ENCODE measurements at regions of chr5 and their contacts with region 1.

Region 1: GRCh38 chr5:172932313-172933017 is 26.8 kb upstream of the RPL26L1 start:
- DNase-seq: peak; percentile 31 to 85 (median 71)
- ATAC-seq: peak; percentile 92 to 97 (median 94)
- H3K4me3 ChIP-seq: no peak overlapping the region
- H3K4me3 Mint-ChIP-seq: no peak overlapping the region
- H3K27ac ChIP-seq: no peak overlapping the region
- H3K27ac Mint-ChIP-seq: no peak overlapping the region
- H3K4me1 ChIP-seq: peaks cover 0 to 6% of the 10 kb centered on the region in 2 experiments
- H3K4me1 Mint-ChIP-seq: peaks cover 0 to 6% (median 6%) of the 10 kb centered on the region in 3 donors
- H3K27me3 ChIP-seq: no peaks in the 10 kb centered on the region
- H3K27me3 Mint-ChIP-seq: no peaks in the 10 kb centered on the region

Region 2: GRCh38 chr5:172707285-172708182 is 224.9 kb before region 1 on chr5:
- CTCF ChIA-PET with region 1: interaction called, 59 to 111 read pairs
- POLR2A ChIA-PET with region 1: interaction called in 1 of 2 experiments, 11 read pairs
- DNase-seq: no peak
- ATAC-seq: no peak
- H3K4me3 ChIP-seq: no peak overlapping the region
- H3K4me3 Mint-ChIP-seq: no peak overlapping the region
- H3K27ac ChIP-seq: no peak overlapping the region
- H3K27ac Mint-ChIP-seq: no peak overlapping the region
- H3K4me1 ChIP-seq: peaks cover 0 to 2% of the 10 kb centered on the region in 2 experiments
- H3K4me1 Mint-ChIP-seq: peaks cover 0 to 4% (median 0%) of the 10 kb centered on the region in 3 donors
- H3K27me3 ChIP-seq: peaks cover 0 to 43% of the 10 kb centered on the region in 2 experiments
- H3K27me3 Mint-ChIP-seq: peaks cover 38 to 46% of the 10 kb centered on the region in 2 donors

Region 3: GRCh38 chr5:172714491-172715421 is 217.7 kb before region 1 on chr5:
- CTCF ChIA-PET with region 1: interaction called, 59 to 111 read pairs
- POLR2A ChIA-PET with region 1: no interaction called
- DNase-seq: peak; percentile 28 to 81 (median 59)
- ATAC-seq: peak; percentile 65 to 81 (median 72)
- H3K4me3 ChIP-seq: no peak overlapping the region
- H3K4me3 Mint-ChIP-seq: no peak overlapping the region
- H3K27ac ChIP-seq: no peak overlapping the region
- H3K27ac Mint-ChIP-seq: no peak overlapping the region
- H3K4me1 ChIP-seq: peaks cover 0 to 27% of the 10 kb centered on the region in 2 experiments
- H3K4me1 Mint-ChIP-seq: peaks cover 8 to 10% (median 9%) of the 10 kb centered on the region in 3 donors
- H3K27me3 ChIP-seq: peaks cover 0 to 44% of the 10 kb centered on the region in 2 experiments
- H3K27me3 Mint-ChIP-seq: peaks cover 10% of the 10 kb centered on the region in 2 donors

Region 4: GRCh38 chr5:172770675-172771438 is 161.6 kb before region 1 on chr5 and contains the start of gene DUSP1:
- CTCF ChIA-PET with region 1: interaction called, 4 to 17 read pairs
- POLR2A ChIA-PET with region 1: no interaction called
- DNase-seq: peak; percentile 93 to 100 (median 98)
- ATAC-seq: peak; percentile 54 to 75 (median 72)
- H3K4me3 ChIP-seq: peak within 1 kb of the TSS; percentile 90 to 95
- H3K4me3 Mint-ChIP-seq: peak within 1 kb of the TSS; percentile 90 to 93 (median 91)
- H3K27ac ChIP-seq: peak within 1 kb of the TSS; percentile 98
- H3K27ac Mint-ChIP-seq: peak within 1 kb of the TSS; percentile 99
- H3K4me1 ChIP-seq: peaks cover 4 to 67% of the 10 kb centered on the region in 2 experiments
- H3K4me1 Mint-ChIP-seq: peaks cover 63 to 75% (median 73%) of the 10 kb centered on the region in 3 donors
- H3K27me3 ChIP-seq: no peaks in the 10 kb centered on the region
- H3K27me3 Mint-ChIP-seq: no peaks in the 10 kb centered on the region
- total RNA-seq, gene DUSP1: 22.6 to 1,564 (median 28.9) TPM

Measured in T-cell (primary cell).